ENCODE measurements at regions of chr3 and their contacts with region 1.

Region 1: DNA sequence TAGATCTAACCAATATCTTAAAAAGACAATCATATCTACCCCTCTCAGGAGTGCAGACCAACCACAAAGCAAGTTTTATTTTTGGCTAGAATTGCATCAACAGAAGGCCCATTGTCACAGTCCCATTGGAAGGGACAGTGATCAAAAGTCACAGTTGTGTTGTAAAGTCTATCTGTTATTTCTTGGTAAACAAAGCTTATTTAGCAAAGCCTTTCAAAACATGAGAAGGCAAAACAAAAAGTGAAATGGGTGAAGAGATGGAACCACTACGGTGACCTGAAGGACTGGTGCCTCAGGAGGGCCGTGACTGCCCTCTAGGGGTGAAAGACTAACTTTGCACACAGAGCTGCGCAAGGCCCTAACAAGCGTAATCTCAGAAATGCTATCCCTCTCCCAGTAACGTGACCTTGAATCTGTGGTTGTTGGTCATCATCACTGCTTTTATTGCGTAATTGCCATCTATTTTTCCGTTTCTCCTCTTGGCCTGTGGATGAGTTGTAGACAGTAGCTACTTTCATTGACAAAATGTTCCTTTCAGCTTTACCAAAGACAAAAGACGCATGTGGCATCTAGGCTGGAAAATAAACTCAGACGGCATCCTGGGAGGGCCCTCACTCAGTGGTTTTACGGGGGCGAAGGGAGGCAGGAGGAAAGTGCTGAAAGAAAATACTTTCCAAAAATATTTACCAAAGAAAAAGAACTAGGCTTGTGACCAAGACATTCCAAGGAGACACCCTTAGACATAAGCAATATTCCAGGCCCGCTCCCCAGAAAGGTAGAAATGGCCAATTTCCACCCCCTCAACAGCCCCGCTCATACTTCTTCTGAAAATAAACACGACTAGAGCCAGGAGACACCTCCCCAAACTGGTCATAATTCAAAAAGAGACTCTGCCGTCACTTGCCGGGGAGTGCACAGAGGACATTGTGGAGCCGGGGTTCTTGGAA is 79.4 kb downstream of the FRMD4B start:
- DNase-seq: peak; percentile 70
- H3K4me3 Mint-ChIP-seq: no peak overlapping the region
- H3K27ac Mint-ChIP-seq: no peak overlapping the region
- H3K4me1 Mint-ChIP-seq: peaks cover 6% of the 10 kb centered on the region
- H3K27me3 Mint-ChIP-seq: no peaks in the 10 kb centered on the region
- CTCF ChIP-seq: peak; percentile 76

Region 2: GRCh38 chr3:69161587-69162307 is 144.8 kb before region 1 on chr3:
- CTCF ChIA-PET with region 1: interaction called, 46 read pairs
- intact Hi-C with region 1: loop called (anchors 1 kb)
- DNase-seq: peak; percentile 32
- H3K4me3 Mint-ChIP-seq: no peak overlapping the region
- H3K27ac Mint-ChIP-seq: no peak overlapping the region
- H3K4me1 Mint-ChIP-seq: peaks cover 7% of the 10 kb centered on the region
- H3K27me3 Mint-ChIP-seq: no peaks in the 10 kb centered on the region
- CTCF ChIP-seq: peak; percentile 72

Region 3: GRCh38 chr3:69226076-69226475 is 80.4 kb before region 1 on chr3:
- CTCF ChIA-PET with region 1: no interaction called
- intact Hi-C with region 1: loop called (anchors 5 kb)
- DNase-seq: no peak
- H3K4me3 Mint-ChIP-seq: peak overlapping the region; percentile 33
- H3K27ac Mint-ChIP-seq: peak overlapping the region; percentile 73
- H3K4me1 Mint-ChIP-seq: peaks cover 45% of the 10 kb centered on the region
- H3K27me3 Mint-ChIP-seq: no peaks in the 10 kb centered on the region
- CTCF ChIP-seq: no peak

Region 4: DNA sequence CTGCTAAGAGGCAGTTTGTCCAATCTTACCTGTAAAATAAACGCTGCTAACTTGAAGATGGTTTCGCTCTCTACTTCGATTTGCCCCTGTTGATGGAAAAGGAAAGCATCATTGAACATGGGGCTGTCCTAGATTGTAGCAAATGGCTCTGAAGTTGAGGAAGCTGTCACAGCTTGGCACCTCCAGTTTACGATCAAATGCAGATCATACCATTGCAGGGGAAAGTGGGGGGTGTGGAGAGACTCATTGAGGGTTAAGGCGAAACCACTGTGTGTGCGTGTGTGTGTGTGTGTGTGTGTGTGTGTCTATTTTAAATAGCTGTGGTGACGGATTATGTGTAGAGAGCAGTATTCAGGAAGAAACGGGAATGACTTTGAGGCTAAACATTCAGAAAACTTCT is 56.5 kb before region 1 on chr3:
- CTCF ChIA-PET with region 1: interaction called, 5 read pairs
- intact Hi-C with region 1: loop called (anchors 5 kb)
- DNase-seq: peak; percentile 78
- H3K4me3 Mint-ChIP-seq: peak overlapping the region; percentile 83
- H3K27ac Mint-ChIP-seq: peak overlapping the region; percentile 85
- H3K4me1 Mint-ChIP-seq: peaks cover 50% of the 10 kb centered on the region
- H3K27me3 Mint-ChIP-seq: no peaks in the 10 kb centered on the region
- CTCF ChIP-seq: no peak

Region 5: GRCh38 chr3:69273896-69274295 is 32.6 kb before region 1 on chr3:
- CTCF ChIA-PET with region 1: no interaction called
- intact Hi-C with region 1: no loop called
- DNase-seq: no peak
- H3K4me3 Mint-ChIP-seq: no peak overlapping the region
- H3K27ac Mint-ChIP-seq: no peak overlapping the region
- H3K4me1 Mint-ChIP-seq: no peaks in the 10 kb centered on the region
- H3K27me3 Mint-ChIP-seq: no peaks in the 10 kb centered on the region
- CTCF ChIP-seq: no peak

Region 6: DNA sequence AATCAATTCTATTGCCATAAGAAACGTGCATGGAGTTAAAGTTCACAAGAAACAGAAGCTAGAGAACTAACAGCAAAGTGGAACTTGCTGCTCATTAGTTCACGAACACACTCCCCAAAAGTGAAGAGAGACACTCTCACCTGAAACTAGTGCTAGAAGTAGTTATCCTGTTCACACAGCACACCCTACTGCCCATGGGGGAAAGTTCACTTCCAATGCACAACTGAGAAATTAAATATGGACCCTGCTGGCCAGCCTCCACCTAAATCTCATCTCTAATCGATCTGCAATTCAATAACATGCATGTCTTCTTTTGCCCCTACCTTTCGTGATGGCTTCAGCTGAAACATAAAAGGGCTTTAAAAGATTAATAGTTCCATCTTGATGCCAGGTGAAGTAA is 118.7 kb after region 1 on chr3:
- CTCF ChIA-PET with region 1: interaction called, 4 read pairs
- intact Hi-C with region 1: loop called (anchors 2 kb)
- DNase-seq: peak; percentile 50
- H3K4me3 Mint-ChIP-seq: no peak overlapping the region
- H3K27ac Mint-ChIP-seq: no peak overlapping the region
- H3K4me1 Mint-ChIP-seq: peaks cover 7% of the 10 kb centered on the region
- H3K27me3 Mint-ChIP-seq: no peaks in the 10 kb centered on the region
- CTCF ChIP-seq: peak; percentile 43

Measured in Calu3 (cell line).